PC-3 (cell line): ENCODE measurements at regions of chr2 and their contacts with region 1.

Region 1: DNA sequence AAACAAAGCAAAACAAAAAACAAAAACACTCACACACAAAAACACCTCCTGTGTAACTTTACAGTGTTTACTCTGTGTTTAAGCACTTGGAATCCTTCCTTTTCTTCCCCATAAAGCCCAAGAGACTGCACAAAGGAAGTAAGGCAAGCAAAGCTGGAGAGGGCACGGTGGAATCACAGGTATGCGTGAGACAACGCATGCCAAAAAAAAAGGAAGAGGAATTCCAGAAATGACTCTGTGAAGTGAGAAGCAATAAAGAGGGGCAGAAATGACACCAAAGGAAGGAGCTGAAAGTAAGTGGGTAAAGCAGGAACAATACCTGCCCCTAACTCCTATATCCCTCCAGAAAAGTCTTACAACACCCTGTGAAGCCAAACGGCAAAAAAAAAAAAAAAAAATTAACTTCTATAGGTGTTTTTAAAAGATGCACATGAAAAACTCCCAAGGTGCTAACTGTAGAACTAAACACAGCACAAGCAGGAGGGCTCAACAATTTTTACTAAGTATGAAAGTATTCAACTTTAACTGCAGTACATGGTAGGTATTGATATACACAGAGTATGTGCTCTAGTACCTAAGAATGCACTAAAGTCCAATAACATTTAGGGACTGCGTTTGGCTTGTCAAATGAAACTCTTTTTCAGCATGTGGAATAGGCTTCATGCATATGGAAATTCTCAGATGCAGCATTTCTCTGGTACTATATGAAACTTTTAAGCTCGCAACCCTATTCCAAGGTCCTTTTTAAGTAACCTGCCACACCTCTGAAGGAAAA is 9.1 kb downstream of the RND3 start:
- DNase-seq: peak; percentile 91
- ATAC-seq: peak; percentile 20
- H3K4me3 ChIP-seq: peak overlapping the region; percentile 58
- H3K27ac ChIP-seq: peak overlapping the region; percentile 98
- H3K4me1 ChIP-seq: peaks cover 98% of the 10 kb centered on the region
- H3K27me3 ChIP-seq: no peaks in the 10 kb centered on the region
- CTCF ChIP-seq: no peak

Region 2: DNA sequence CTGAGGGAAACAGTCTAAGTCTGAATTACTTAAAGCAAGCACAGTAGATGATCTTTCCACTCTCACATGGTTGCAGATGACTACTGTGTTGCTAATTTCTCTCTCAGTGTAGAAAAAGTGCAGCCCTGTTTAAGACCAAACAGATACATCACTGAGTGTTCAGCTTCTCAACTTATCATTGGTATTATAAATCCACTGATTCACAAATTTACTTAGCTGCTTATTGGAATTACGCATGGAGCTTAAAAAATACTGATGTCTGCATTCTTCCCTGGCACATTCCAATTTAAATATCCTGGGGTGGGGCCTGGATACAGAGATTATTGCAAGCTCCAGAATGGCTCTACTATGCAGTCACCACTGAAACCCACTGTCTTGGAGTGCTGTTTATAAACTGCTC is 402.1 kb before region 1 on chr2:
- CTCF ChIA-PET with region 1: no interaction called
- POLR2A ChIA-PET with region 1: interaction called, 14 read pairs
- intact Hi-C with region 1: no loop called
- DNase-seq: peak; percentile 75
- ATAC-seq: peak; percentile 81
- H3K4me3 ChIP-seq: no peak overlapping the region
- H3K27ac ChIP-seq: peak overlapping the region; percentile 89
- H3K4me1 ChIP-seq: peaks cover 18% of the 10 kb centered on the region
- H3K27me3 ChIP-seq: no peaks in the 10 kb centered on the region
- CTCF ChIP-seq: no peak

Region 3: GRCh38 chr2:150271952-150272802 is 206.2 kb before region 1 on chr2:
- CTCF ChIA-PET with region 1: no interaction called
- POLR2A ChIA-PET with region 1: no interaction called
- intact Hi-C with region 1: loop called (anchors 2 kb)
- DNase-seq: peak; percentile 93
- ATAC-seq: peak; percentile 97
- H3K4me3 ChIP-seq: peak overlapping the region; percentile 2; the same call in 1 of the 2 replicates
- H3K27ac ChIP-seq: peak overlapping the region; percentile 77
- H3K4me1 ChIP-seq: peaks cover 28% of the 10 kb centered on the region
- H3K27me3 ChIP-seq: no peaks in the 10 kb centered on the region
- CTCF ChIP-seq: no peak

Region 4: DNA sequence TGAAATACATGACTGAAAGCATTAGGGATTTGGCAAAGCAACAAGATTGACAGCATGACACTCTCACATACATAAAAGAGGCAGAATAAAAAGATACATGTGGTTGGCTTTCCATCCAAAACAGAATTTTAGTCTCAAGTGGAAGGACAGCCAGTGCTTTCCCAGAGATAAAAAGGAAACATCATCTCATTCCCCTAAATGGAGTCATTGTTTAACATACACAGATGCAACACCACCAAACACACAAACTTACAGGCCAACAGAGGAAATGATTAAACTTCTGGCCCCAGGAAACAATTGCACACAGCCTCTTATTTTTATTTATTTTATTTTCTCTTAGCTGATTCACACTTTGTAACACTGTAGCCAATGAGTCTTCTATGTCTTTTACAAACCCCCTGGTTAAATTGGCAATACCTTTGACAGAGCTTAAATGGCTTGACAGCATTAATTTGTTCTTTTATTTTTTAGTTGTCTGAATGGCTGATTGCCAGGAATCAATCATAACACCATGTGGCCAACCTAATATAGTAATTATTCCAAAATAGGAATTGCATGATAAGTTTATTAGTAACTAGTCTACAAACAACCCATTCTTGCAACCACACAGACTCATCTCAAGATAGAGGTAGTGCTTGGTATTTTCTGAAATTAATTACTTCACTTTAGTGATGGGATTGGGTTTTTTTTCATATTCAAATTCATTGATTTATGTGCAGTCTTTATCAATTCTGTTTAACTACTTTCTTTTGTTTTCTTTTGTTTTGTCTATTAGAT is 181.4 kb before region 1 on chr2:
- CTCF ChIA-PET with region 1: no interaction called
- POLR2A ChIA-PET with region 1: no interaction called
- intact Hi-C with region 1: loop called (anchors 2 kb)
- DNase-seq: peak; percentile 85
- ATAC-seq: peak; percentile 96
- H3K4me3 ChIP-seq: no peak overlapping the region
- H3K27ac ChIP-seq: peak overlapping the region; percentile 77
- H3K4me1 ChIP-seq: peaks cover 28% of the 10 kb centered on the region
- H3K27me3 ChIP-seq: no peaks in the 10 kb centered on the region
- CTCF ChIP-seq: no peak

Region 5: DNA sequence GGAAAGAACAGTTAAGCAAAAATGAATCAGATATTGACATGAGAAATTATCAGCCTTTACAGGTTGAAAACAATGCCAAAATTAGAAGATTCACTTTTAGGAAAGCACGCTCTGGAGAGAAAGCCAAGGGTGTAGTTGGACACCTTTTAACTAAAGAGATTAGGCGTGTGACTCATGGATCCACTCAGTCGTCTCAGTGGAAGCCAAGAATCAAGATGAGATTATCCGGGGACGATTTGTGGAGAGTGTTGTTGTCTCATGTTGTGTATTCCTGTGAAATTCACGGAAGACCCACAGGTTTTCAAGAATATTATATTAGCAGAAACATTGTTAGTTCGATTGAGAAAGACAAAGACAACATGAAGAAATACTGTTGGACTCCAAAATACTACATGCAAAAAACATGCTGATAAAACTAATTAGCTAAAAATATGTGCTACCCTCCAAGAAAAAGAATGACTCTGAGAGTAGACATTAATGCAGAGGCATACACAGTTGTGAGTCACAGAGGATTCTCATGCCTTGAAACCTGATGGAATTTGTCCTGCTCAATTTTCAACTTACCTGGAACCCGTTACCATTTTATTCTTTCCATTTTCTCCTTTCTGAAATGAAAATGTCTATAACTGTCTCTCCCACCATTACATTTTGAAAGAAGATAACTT is 201.2 kb after region 1 on chr2:
- CTCF ChIA-PET with region 1: no interaction called
- POLR2A ChIA-PET with region 1: no interaction called
- intact Hi-C with region 1: no loop called
- DNase-seq: no peak
- ATAC-seq: no peak
- H3K4me3 ChIP-seq: no peak overlapping the region
- H3K27ac ChIP-seq: peak overlapping the region; percentile 93; the same call in 1 of the 2 replicates
- H3K4me1 ChIP-seq: peaks cover 36% of the 10 kb centered on the region
- H3K27me3 ChIP-seq: no peaks in the 10 kb centered on the region
- CTCF ChIP-seq: no peak